ENCODE measurements at regions of chr16 and their contacts with region 1.

Region 1: GRCh38 chr16:22190776-22191531 is 15.1 kb upstream of the EEF2K start:
- DNase-seq: peak; percentile 100
- H3K4me3 Mint-ChIP-seq: peak overlapping the region; percentile 83
- H3K27ac Mint-ChIP-seq: peak overlapping the region; percentile 99
- H3K4me1 Mint-ChIP-seq: peaks cover 57% of the 10 kb centered on the region
- H3K27me3 Mint-ChIP-seq: peaks cover 2% of the 10 kb centered on the region

Region 2: DNA sequence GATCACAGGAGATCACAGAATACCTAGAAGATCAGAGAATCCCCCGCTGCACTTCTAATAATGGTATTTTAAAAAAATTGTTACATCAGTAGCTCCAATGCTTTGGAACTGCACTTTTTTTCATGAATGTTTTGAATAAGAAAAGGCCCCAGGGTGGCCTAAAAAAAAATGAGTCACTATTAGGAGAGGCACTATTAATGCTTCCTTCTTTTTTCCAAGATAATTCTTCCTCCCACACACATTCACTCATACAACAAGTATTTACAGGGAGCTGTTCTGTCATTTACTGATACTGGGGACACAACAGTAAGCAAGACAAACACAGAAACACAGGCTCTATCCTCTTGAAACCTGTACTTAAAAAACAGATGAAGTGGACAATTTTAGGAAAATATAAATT is 189.4 kb before region 1 on chr16:
- CTCF ChIA-PET with region 1: interaction called, 21 read pairs
- POLR2A ChIA-PET with region 1: no interaction called
- DNase-seq: no peak
- H3K4me3 Mint-ChIP-seq: no peak overlapping the region
- H3K27ac Mint-ChIP-seq: no peak overlapping the region
- H3K4me1 Mint-ChIP-seq: peaks cover 10% of the 10 kb centered on the region
- H3K27me3 Mint-ChIP-seq: no peaks in the 10 kb centered on the region

Region 3: DNA sequence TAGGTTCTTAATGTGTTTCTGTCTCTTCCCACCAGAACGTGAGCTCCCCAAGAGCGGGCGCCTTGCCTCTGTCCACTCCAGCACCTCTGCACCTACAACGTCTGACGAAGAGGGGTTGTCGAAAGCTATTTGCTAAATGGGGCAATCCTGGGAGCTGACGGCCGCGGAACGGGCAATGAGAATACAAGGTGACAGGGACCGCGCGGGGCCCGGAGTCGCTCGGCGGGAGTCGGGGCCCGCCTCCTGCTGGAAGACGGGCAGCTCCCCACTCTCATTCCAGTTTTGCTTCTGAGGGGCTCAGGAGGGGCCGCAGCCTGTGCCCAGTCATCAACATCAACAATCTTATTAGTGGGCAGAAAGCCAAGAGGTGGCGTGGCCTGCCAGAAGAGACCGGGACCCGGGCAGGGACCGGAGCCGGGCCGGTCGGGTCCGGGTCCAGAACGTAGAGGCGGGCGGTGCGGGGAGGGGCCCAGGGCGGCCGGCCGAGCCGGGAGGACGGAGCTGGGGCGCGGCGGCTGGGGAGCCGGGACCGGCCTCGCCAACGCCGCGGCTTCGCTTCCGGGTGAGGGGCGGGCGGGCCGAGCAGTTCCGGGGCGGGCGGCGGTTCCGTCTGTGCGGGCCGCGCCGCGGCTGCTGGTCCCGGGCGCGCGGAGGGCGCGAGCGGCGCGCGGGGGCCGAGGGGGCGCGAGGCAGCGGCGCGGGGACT is 183.3 kb before region 1 on chr16 and contains the start of gene MOSMO:
- CTCF ChIA-PET with region 1: interaction called, 20 read pairs
- POLR2A ChIA-PET with region 1: no interaction called
- DNase-seq: peak; percentile 68
- H3K4me3 Mint-ChIP-seq: peak within 1 kb of the TSS; percentile 82
- H3K27ac Mint-ChIP-seq: peak within 1 kb of the TSS; percentile 90
- H3K4me1 Mint-ChIP-seq: peaks cover 28% of the 10 kb centered on the region
- H3K27me3 Mint-ChIP-seq: no peaks in the 10 kb centered on the region
- total RNA-seq, gene MOSMO: 10.7 to 11.9 TPM

Region 4: GRCh38 chr16:22077700-22078313 is 113.1 kb before region 1 on chr16:
- CTCF ChIA-PET with region 1: interaction called, 11 read pairs
- POLR2A ChIA-PET with region 1: interaction called, 5 read pairs
- DNase-seq: peak; percentile 79
- H3K4me3 Mint-ChIP-seq: no peak overlapping the region
- H3K27ac Mint-ChIP-seq: no peak overlapping the region
- H3K4me1 Mint-ChIP-seq: peaks cover 4% of the 10 kb centered on the region
- H3K27me3 Mint-ChIP-seq: peaks cover 2% of the 10 kb centered on the region

Region 5: DNA sequence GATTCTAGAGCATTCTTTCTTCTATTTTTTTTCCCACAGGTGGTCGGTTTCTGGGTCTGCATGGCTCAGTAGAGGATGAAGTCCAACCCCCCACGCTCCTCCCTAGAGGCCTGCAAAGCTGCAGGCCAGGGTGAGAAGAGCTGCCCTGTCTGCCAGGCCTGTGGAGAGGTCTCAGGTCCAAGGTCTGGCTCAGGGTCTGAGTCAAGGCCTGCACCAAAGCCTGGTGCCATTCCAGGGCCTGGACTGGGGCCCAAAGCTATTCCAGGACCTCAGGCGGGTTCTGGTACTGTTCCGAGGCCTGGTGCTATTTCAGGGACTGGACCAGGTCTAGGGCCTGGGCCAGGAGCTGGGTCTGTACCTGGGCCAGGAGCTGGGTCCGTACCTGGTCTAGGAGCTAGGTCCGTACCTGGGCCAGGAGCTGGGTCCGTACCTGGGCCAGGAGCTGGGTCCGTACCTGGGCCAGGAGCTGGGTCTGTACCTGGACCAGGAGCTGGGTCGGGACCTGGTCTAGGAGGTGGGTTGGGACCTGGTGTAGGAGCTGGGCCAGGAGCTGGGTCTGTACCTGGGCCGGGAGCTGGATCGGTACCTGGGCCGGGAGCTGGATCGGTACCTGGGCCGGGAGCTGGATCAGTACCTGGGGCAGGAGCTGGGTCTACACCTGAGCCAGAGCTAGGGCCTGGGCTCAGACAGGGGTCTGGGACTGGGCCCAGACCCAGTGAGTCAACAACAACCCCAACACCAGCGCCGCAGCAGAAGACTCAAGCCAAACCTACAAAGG is 25.3 kb before region 1 on chr16:
- CTCF ChIA-PET with region 1: interaction called, 10 read pairs
- POLR2A ChIA-PET with region 1: no interaction called
- DNase-seq: no peak
- H3K4me3 Mint-ChIP-seq: no peak overlapping the region
- H3K27ac Mint-ChIP-seq: no peak overlapping the region
- H3K4me1 Mint-ChIP-seq: peaks cover 5% of the 10 kb centered on the region
- H3K27me3 Mint-ChIP-seq: peaks cover 9% of the 10 kb centered on the region

Region 6: DNA sequence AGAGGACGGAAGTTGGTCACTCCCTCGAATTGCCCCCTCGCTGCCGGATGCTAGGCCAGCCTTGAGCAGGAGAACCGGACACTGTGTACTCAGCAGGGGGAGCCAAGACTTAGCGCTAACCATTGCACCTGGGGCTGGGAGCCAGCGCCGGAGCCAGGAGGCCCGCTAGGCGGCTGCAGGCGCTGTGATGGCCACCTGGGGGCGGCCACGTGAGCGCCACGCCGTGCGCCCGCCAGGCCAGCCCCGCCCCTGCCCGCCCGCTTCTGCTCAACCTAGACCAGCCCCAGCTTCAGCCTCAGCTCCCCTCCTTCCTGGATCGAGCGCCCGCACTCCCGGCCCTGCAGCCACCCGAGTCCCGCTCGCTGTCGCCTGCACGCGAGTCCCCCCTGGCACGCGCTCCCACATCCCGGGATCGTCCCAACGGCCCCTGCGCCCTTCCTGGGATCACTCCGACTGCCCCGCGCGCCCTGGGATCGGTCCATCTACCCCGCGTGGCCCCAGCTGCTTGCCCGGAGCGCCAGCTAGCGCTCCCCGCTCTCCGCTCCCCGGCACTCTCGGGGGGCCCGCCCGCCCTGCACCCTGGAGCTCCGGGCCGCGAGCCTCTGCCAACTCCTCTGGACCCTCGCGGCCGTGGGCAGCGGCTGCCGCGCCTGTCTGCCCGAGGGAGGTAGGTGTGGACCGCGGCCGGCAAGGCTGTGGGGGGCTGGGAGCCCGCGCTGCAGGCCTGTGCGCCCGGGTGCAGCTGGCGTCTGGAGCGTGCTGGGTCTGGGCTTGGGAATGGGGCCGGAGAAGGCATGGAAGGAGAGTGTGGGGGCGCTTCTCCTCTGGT is 15.3 kb after region 1 on chr16 and contains the start of gene EEF2K:
- CTCF ChIA-PET with region 1: interaction called, 37 read pairs
- POLR2A ChIA-PET with region 1: interaction called, 3 read pairs
- DNase-seq: peak; percentile 83
- H3K4me3 Mint-ChIP-seq: peak within 1 kb of the TSS; percentile 93
- H3K27ac Mint-ChIP-seq: peak within 1 kb of the TSS; percentile 83
- H3K4me1 Mint-ChIP-seq: peaks cover 33% of the 10 kb centered on the region
- H3K27me3 Mint-ChIP-seq: no peaks in the 10 kb centered on the region
- total RNA-seq, gene EEF2K: 21.9 to 23.8 TPM

Region 7: GRCh38 chr16:22297114-22297878 is 106.3 kb after region 1 on chr16 and contains the start of gene POLR3E:
- CTCF ChIA-PET with region 1: interaction called, 41 read pairs
- POLR2A ChIA-PET with region 1: no interaction called
- DNase-seq: peak; percentile 100
- H3K4me3 Mint-ChIP-seq: peak within 1 kb of the TSS; percentile 94
- H3K27ac Mint-ChIP-seq: peak within 1 kb of the TSS; percentile 98
- H3K4me1 Mint-ChIP-seq: peaks cover 41% of the 10 kb centered on the region
- H3K27me3 Mint-ChIP-seq: peaks cover 3% of the 10 kb centered on the region
- total RNA-seq, gene POLR3E: 52.4 to 54.3 TPM